A549 (cell line): ENCODE measurements at regions of chr7 and their contacts with region 1.

Region 1: GRCh38 chr7:36670585-36671431 is 53.5 kb downstream of the AOAH start:
- DNase-seq: peak; percentile 56 to 64
- ATAC-seq: peak; percentile 88 to 96
- H3K4me3 ChIP-seq: no peak overlapping the region
- H3K27ac ChIP-seq: no peak overlapping the region
- H3K4me1 ChIP-seq: 0 out of 3 replicates have a peak, but pooled peaks cover 6% of the 10 kb centered on the region
- CTCF ChIP-seq: peak; percentile 84
- EP300 ChIP-seq: no peak
- POLR2A ChIP-seq: no peak
- RAD21 ChIP-seq: peak; percentile 86 to 93

Region 2: DNA sequence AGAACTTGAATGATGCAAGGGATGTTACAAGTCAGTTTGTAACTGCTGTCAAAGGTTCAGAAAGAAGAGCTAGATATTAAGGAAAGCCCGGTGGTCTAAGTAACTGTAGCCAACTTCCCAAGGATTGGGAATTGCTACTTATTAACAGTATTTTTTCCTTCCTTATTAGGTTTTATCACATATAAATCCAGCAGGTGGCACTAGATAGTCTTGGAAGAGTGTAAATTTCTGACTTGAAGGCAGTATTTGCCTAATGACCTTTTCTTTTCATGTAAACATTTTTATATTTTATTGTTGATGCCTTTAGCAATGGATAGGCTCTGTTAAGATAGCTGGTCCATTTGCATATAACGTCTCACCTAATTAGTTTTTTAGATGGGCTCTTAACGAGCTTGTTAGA is 229.9 kb before region 1 on chr7:
- CTCF ChIA-PET with region 1: interaction called, 16 read pairs
- POLR2A ChIA-PET with region 1: no interaction called
- DNase-seq: peak; percentile 37 to 41
- ATAC-seq: peak; percentile 76 to 81; a peak in 4 of 6 replicates
- H3K4me3 ChIP-seq: no peak overlapping the region
- H3K27ac ChIP-seq: no peak overlapping the region
- H3K4me1 ChIP-seq: no peaks in the 10 kb centered on the region
- CTCF ChIP-seq: peak; percentile 74
- EP300 ChIP-seq: no peak
- POLR2A ChIP-seq: no peak
- RAD21 ChIP-seq: peak; percentile 42 to 65; a peak in 4 of 5 replicates

Region 3: DNA sequence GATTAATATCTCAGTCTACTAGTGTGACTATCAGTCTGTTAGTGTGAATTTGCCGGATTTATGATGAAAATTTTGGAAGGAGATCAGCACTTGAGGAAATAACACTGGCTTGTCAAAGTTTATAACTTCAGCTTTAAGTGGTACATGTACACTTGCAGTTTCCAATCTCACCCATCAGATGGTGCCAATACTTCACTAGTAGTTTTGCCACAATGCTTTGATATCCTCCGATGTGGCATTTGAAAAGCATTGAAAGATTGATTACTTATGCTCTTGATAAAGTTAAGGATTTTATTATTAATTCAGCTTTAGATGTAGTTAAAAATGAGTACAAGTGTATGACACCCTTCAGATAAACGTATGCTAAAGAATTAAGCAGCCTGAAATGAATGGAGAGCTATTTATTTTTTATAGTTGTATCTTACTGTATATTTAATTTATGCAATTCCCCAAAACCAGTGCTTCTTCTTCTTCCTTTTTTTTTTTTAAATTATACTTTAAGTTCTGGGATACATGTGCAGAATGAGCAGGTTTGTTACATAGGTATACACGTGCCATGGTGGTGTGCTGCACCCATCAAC is 183.0 kb before region 1 on chr7:
- CTCF ChIA-PET with region 1: interaction called, 261 read pairs
- POLR2A ChIA-PET with region 1: no interaction called
- DNase-seq: peak; percentile 47 to 71
- ATAC-seq: peak; percentile 59 to 75; a peak in 4 of 6 replicates
- H3K4me3 ChIP-seq: no peak overlapping the region
- H3K27ac ChIP-seq: no peak overlapping the region
- H3K4me1 ChIP-seq: no peaks in the 10 kb centered on the region
- CTCF ChIP-seq: peak; percentile 93
- EP300 ChIP-seq: no peak
- POLR2A ChIP-seq: no peak
- RAD21 ChIP-seq: peak; percentile 95 to 97

Region 4: DNA sequence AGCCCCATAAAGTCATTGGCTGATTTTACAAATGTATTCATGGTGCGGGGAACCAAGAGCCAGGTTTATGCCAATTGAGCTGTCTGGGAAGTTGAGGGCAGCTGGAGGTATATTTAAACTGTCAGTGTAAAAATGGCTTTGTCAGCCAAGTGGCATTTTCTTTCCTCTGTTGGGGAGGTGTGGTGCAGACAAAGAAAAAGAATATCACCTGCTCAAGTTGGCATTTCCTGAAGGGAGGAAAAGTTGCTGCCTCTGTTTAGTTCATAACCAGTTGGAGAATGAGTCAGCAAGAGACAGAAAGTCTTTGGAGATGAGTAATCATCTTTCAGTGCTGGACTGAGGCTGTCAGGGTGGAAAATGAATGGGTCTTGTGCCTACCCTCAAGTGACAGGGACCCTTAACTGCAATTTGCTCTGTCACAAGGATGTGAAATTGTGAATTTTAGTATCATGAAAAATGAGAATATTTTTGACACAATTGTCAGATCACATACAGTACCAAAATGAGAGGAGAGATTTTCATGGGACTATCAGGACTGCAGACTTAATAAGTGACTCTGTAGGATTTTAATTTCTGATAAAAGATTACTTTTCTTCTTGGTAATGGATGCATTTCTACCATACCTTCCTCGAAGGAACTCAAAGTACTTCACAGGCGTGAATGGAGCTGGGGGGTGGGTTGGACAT is 143.8 kb before region 1 on chr7:
- CTCF ChIA-PET with region 1: interaction called, 16 read pairs
- POLR2A ChIA-PET with region 1: no interaction called
- DNase-seq: peak; percentile 71 to 80
- ATAC-seq: peak; percentile 92 to 96
- H3K4me3 ChIP-seq: no peak overlapping the region
- H3K27ac ChIP-seq: peak overlapping the region; percentile 71 to 74
- H3K4me1 ChIP-seq: peaks cover 23% of the 10 kb centered on the region
- CTCF ChIP-seq: no peak
- EP300 ChIP-seq: no peak
- POLR2A ChIP-seq: no peak
- RAD21 ChIP-seq: no peak; a peak in 1 of 5 replicates

Region 5: GRCh38 chr7:36648441-36648840 is 22.4 kb before region 1 on chr7:
- CTCF ChIA-PET with region 1: interaction called, 11 read pairs
- POLR2A ChIA-PET with region 1: no interaction called
- DNase-seq: no peak
- ATAC-seq: no peak
- H3K4me3 ChIP-seq: no peak overlapping the region
- H3K27ac ChIP-seq: no peak overlapping the region
- H3K4me1 ChIP-seq: peaks cover 33% of the 10 kb centered on the region
- CTCF ChIP-seq: no peak
- EP300 ChIP-seq: no peak
- POLR2A ChIP-seq: no peak
- RAD21 ChIP-seq: no peak

Region 6: DNA sequence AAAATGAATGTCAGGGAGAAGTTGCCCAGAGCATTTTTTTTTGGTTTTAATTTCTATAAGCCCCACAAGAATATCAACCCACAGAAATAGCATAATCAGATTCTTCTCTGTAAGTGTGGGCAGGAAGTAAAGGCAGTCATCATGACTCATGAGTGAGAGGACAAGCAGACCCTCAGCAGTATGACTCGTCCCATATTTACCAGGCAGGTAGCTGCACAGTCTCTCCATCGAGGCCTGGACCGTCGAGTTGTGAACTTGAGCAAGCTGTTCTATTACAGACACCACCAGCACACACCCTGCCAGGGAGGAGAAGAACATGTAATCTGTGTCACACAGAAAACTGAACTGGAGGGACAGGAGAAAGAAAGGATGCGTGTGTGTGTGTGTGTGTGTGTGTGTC is 15.7 kb after region 1 on chr7:
- CTCF ChIA-PET with region 1: interaction called, 35 read pairs
- POLR2A ChIA-PET with region 1: no interaction called
- DNase-seq: no peak
- ATAC-seq: no peak
- H3K4me3 ChIP-seq: no peak overlapping the region
- H3K27ac ChIP-seq: no peak overlapping the region
- H3K4me1 ChIP-seq: no peaks in the 10 kb centered on the region
- CTCF ChIP-seq: no peak
- EP300 ChIP-seq: no peak
- POLR2A ChIP-seq: no peak
- RAD21 ChIP-seq: no peak